Heart right ventricle (tissue), 16 donors: ENCODE measurements at regions of chr4 and their contacts with region 1.

Region 1: DNA sequence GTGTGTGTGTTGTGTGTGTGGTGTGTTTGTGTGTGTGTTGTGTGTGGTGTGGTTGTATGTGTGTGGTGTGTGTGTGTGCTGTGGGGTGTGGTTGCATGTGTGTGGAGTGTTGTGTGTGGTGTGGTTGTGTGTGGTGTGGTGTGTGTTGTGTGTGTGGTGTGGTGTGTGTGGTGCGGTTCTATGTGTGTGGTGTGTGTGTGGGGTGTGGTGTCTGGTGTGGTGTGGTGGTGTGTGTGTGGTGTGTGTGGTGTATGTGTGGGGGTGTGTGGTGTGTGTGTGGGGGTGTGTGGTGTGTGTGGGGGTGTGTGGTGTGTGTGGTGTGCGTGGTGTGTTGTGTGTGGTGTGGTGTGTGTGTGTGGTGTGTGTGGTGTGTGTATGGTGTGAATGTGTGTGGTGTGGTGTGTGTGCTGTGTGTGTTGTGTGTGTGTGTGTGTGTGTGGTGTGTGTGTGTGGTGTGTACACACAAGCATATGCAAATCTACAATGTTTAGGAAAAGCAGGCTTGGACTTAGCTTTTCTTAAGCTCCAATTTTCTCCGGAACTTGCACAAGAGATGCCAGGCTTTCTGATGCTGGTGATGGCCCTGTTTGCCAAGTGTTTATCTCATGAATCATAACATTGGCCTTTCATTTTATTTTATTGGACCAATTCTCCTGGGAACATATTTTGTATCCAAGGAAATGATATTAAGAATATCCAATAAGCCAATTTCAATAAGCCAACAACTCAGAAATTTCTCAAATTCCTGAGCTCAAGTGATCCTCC is 148.7 kb downstream of the SPATA18 start:
- DNase-seq: no peak
- ATAC-seq: no peak
- H3K4me3 ChIP-seq: no peak overlapping the region
- H3K27ac ChIP-seq: no peak overlapping the region
- H3K4me1 ChIP-seq: peaks cover 0 to 13% (median 0%) of the 10 kb centered on the region in 9 donors
- H3K27me3 ChIP-seq: peaks cover 0 to 32% (median 20%) of the 10 kb centered on the region in 7 donors
- CTCF ChIP-seq: no peak

Region 2: GRCh38 chr4:51895813-51896408 is 303.8 kb before region 1 on chr4:
- intact Hi-C with region 1: no loop called
- DNase-seq: peak in 1 of 2 donors; percentile 70
- ATAC-seq: peak; percentile 89 to 98 (median 94)
- H3K4me3 ChIP-seq: no peak overlapping the region
- H3K27ac ChIP-seq: peak overlapping the region in 4 of 10 donors; percentile 5 to 38 (median 30)
- H3K4me1 ChIP-seq: peaks cover 0 to 25% (median 3%) of the 10 kb centered on the region in 9 donors
- H3K27me3 ChIP-seq: no peaks in the 10 kb centered on the region
- CTCF ChIP-seq: peak; percentile 65 to 90 (median 81)

Region 3: GRCh38 chr4:52260514-52261210 is 60.9 kb after region 1 on chr4:
- intact Hi-C with region 1: loop called in 1 of 10 experiments (anchors 10 kb)
- DNase-seq: peak; percentile 18 to 45
- ATAC-seq: peak in 7 of 8 donors; percentile 65 to 93 (median 81)
- H3K4me3 ChIP-seq: no peak overlapping the region
- H3K27ac ChIP-seq: peak overlapping the region in 5 of 10 donors; percentile 15 to 59 (median 28)
- H3K4me1 ChIP-seq: peaks cover 0 to 30% (median 16%) of the 10 kb centered on the region in 9 donors
- H3K27me3 ChIP-seq: no peaks in the 10 kb centered on the region
- CTCF ChIP-seq: no peak